ENCODE measurements at regions of chr7 and their contacts with region 1.

Region 1: DNA sequence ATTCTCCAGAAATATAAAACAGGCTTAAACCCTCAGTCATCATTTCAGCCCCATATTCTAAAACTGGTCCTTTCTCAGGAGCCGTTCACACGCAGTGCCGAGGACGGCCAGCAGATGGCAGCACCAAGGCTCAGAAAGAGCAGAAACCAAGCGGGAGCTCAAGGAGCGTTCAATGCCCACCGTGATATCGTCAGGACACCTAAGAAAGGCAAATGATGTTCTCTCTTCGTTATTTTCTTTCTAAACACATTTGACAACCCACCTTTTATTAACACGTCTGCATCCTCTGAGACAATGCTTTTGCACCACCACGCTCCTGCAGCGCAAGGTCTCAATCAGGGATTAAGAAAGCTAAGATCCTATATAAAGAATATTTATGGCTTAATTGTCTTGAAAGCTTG is 45.7 kb upstream of the RBM33 start:
- DNase-seq: peak; percentile 76 to 80
- H3K4me3 ChIP-seq: no peak overlapping the region
- H3K27ac ChIP-seq: no peak overlapping the region
- H3K4me1 ChIP-seq: no peaks in the 10 kb centered on the region
- H3K27me3 ChIP-seq: peaks cover 0 to 6% of the 10 kb centered on the region in 2 donors
- CTCF ChIP-seq: peak; percentile 84 to 93 (median 88)
- POLR2A ChIP-seq: no peak

Region 2: DNA sequence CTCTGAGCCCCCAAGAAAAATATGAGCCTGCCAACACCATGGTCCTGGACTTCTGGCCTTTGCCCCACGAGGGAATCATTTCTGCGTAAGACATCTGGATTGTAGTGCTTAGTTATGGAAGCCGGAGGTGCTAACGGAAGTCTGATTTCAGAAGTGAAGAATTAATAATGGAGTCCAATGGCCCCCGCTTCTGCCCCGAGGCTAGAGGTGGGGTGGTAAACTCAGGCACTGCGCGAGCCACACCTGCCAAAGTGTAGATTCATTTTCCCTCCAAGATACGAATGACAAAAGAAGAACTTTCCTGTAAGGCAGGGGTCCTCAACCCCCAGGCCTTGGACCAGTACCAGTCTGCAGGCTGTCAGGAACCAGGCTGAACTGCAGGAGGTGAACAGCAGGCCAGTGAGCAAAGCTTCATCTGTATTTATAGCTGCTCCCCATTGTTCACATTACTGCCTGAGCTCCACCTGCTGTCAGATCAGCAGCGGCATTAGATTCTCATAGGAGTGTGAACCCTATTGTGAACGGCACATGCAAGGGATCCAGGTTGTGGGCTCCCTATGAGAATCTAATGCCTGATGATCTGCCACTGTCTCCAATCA is 74.7 kb before region 1 on chr7:
- intact Hi-C with region 1: no loop called
- DNase-seq: no peak
- H3K4me3 ChIP-seq: no peak overlapping the region
- H3K27ac ChIP-seq: no peak overlapping the region
- H3K4me1 ChIP-seq: no peaks in the 10 kb centered on the region
- H3K27me3 ChIP-seq: no peaks in the 10 kb centered on the region
- CTCF ChIP-seq: no peak
- POLR2A ChIP-seq: no peak

Region 3: GRCh38 chr7:155738652-155739537 is 140.1 kb after region 1 on chr7:
- intact Hi-C with region 1: loop called (anchors 10 kb)
- DNase-seq: peak; percentile 58 to 71
- H3K4me3 ChIP-seq: no peak overlapping the region
- H3K27ac ChIP-seq: no peak overlapping the region
- H3K4me1 ChIP-seq: no peaks in the 10 kb centered on the region
- H3K27me3 ChIP-seq: no peaks in the 10 kb centered on the region
- CTCF ChIP-seq: peak; percentile 46 to 63 (median 52)
- POLR2A ChIP-seq: no peak

Region 4: DNA sequence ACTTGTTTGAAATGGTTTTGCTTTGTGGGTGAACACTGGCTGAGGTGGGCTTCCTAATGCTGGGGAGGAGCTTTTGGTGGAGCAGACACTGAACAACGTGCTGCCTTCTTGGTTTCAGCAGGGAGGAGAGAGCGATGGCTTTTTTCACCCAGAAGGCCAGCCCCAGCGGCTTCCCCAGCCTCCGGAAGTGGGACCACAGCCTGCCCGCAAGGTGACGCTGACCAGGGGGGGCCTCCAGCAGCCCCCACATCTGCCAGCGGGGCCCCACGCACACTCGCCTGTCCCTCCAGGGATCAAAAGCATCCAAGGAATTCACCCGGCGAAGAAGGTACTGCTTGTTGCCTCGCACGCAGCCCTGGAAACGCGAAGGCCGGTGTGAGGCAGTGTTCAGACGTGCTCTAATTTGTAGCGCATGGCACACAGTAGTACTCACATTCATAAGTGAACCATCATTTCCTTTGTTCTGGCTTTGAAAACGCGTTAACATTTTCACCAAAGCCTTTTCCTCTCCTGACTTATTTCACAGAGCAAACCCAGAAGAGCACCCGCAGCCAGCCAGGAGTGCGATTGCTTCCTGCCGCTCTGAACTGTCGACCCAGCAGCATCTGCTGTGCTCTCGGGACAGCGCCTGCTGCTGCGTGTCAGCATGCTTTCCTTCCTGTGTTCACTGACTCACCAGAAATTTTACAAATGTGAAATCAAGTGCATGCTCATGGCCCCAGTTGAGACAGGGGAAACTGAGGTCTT is 165.1 kb after region 1 on chr7:
- intact Hi-C with region 1: loop called (anchors 10 kb)
- DNase-seq: no peak
- H3K4me3 ChIP-seq: no peak overlapping the region
- H3K27ac ChIP-seq: peak overlapping the region; percentile 51 to 52
- H3K4me1 ChIP-seq: no peaks in the 10 kb centered on the region
- H3K27me3 ChIP-seq: no peaks in the 10 kb centered on the region
- CTCF ChIP-seq: no peak
- POLR2A ChIP-seq: no peak

Measured in uterus (tissue), 4 donors.